ENCODE measurements at regions of chr1 and their contacts with region 1.

Region 1: DNA sequence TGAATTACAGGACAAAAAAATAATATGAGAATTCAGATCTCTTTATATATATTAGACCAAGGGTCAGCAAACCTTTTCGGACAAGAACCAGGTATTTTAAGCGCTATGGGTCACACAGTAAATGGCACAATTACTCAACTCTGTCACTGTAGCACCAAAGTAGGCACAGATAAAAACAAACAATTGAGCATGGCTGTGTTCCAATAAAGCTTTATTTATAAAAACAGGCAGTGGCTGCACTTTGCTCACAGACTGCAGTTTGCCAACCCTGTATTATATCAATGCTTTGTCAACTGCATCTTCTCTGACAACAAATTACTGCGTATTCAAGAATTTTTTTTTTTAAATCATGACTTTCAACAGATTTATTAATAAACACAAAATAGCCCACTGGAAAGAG is 29.8 kb downstream of the EDEM3 start:
- DNase-seq: no peak
- H3K4me3 ChIP-seq: no peak overlapping the region
- H3K4me3 Mint-ChIP-seq: no peak overlapping the region
- H3K27ac ChIP-seq: no peak overlapping the region
- H3K27ac Mint-ChIP-seq: no peak overlapping the region
- H3K4me1 ChIP-seq: no peaks in the 10 kb centered on the region
- H3K4me1 Mint-ChIP-seq: no peaks in the 10 kb centered on the region
- H3K27me3 ChIP-seq: no peaks in the 10 kb centered on the region
- H3K27me3 Mint-ChIP-seq: no peaks in the 10 kb centered on the region
- CTCF ChIP-seq: no peak

Region 2: GRCh38 chr1:182869241-182869666 is 1855.6 kb before region 1 on chr1:
- intact Hi-C with region 1: loop called (anchors 10 kb)
- DNase-seq: no peak
- H3K4me3 ChIP-seq: no peak overlapping the region
- H3K4me3 Mint-ChIP-seq: no peak overlapping the region
- H3K27ac ChIP-seq: peak overlapping the region in 1 of 2 donors; percentile 47
- H3K27ac Mint-ChIP-seq: peak overlapping the region in 5 of 7 donors; percentile 6 to 69 (median 41)
- H3K4me1 ChIP-seq: no peaks in the 10 kb centered on the region
- H3K4me1 Mint-ChIP-seq: no peaks in the 10 kb centered on the region
- H3K27me3 ChIP-seq: no peaks in the 10 kb centered on the region
- H3K27me3 Mint-ChIP-seq: no peaks in the 10 kb centered on the region
- CTCF ChIP-seq: no peak

Region 3: GRCh38 chr1:182877842-182878241 is 1847.0 kb before region 1 on chr1:
- intact Hi-C with region 1: loop called in 1 of 2 experiments (anchors 10 kb)
- DNase-seq: no peak
- H3K4me3 ChIP-seq: no peak overlapping the region
- H3K4me3 Mint-ChIP-seq: no peak overlapping the region
- H3K27ac ChIP-seq: no peak overlapping the region
- H3K27ac Mint-ChIP-seq: no peak overlapping the region
- H3K4me1 ChIP-seq: no peaks in the 10 kb centered on the region
- H3K4me1 Mint-ChIP-seq: no peaks in the 10 kb centered on the region
- H3K27me3 ChIP-seq: no peaks in the 10 kb centered on the region
- H3K27me3 Mint-ChIP-seq: peaks cover 0 to 1% (median 0%) of the 10 kb centered on the region in 3 donors
- CTCF ChIP-seq: no peak

Measured in CD14-positive monocyte (primary cell).